A673 (cell line): ENCODE measurements at regions of chr2 and their contacts with region 1.

Region 1: GRCh38 chr2:241069821-241070281 is 32.2 kb downstream of the MTERF4 start:
- DNase-seq: no peak
- H3K4me3 ChIP-seq: no peak overlapping the region
- H3K27ac ChIP-seq: no peak overlapping the region
- H3K4me1 ChIP-seq: no peaks in the 10 kb centered on the region
- H3K27me3 ChIP-seq: no peaks in the 10 kb centered on the region
- CTCF ChIP-seq: no peak

Region 2: DNA sequence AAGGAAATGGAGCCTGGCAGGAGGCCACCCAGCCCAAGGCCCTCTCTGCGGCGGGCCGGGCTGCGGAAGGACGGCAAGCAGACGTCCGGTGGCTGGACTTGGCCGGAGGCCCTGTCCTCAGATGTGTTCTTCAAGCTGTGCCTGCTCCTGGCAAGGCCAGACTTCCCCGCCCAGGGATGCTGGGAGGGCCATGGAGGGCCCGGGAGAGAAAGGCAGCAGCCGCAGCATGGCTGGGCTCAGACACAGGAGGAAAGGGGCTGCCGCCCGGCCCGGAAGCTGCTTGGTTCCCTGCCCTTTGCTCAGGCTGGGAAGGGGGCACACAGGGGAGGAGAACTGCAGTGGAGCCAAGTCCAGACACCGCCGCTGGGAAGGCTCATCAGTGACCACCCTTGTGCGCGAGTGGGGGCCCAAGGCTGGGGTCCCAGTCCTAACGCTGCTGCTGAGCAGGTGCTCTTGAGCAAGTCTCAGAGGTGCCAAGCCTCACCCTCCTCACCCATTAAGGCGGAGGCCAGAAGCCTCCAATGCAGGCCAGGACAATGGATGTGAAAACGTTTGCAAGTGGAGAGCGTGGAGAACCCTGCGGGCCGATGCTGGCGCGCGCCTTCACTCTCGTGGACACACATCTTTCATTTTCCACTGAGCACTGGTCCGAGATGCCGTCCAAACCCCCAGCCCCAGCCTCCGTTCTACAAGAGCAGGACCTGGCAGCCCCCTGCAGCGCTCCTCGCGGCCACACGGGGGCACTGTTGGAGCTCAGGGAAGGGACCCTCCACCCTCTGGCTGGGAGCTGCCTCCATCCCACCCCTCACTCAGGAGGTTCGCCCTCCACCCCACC is 155.8 kb before region 1 on chr2:
- CTCF ChIA-PET with region 1: interaction called, 3 read pairs
- POLR2A ChIA-PET with region 1: no interaction called
- intact Hi-C with region 1: loop called (anchors 10 kb)
- DNase-seq: peak; percentile 79
- H3K4me3 ChIP-seq: no peak overlapping the region
- H3K27ac ChIP-seq: no peak overlapping the region
- H3K4me1 ChIP-seq: peaks cover 24% of the 10 kb centered on the region
- H3K27me3 ChIP-seq: no peaks in the 10 kb centered on the region
- CTCF ChIP-seq: peak; percentile 99

Region 3: GRCh38 chr2:241177526-241178334 is 107.9 kb after region 1 on chr2:
- CTCF ChIA-PET with region 1: no interaction called
- POLR2A ChIA-PET with region 1: no interaction called
- intact Hi-C with region 1: no loop called
- DNase-seq: no peak
- H3K4me3 ChIP-seq: no peak overlapping the region
- H3K27ac ChIP-seq: no peak overlapping the region
- H3K4me1 ChIP-seq: no peaks in the 10 kb centered on the region
- H3K27me3 ChIP-seq: no peaks in the 10 kb centered on the region
- CTCF ChIP-seq: no peak